Sigmoid colon (tissue), 7 donors: ENCODE measurements at regions of chr5 and their contacts with region 1.

Region 1: GRCh38 chr5:72459089-72459661 is 48.0 kb downstream of the ZNF366 start:
- DNase-seq: no peak
- H3K4me3 ChIP-seq: no peak overlapping the region
- H3K27ac ChIP-seq: peak overlapping the region in 3 of 4 donors; percentile 29 to 55 (median 35)
- H3K4me1 ChIP-seq: peaks cover 0 to 19% (median 14%) of the 10 kb centered on the region in 4 donors
- H3K27me3 ChIP-seq: no peaks in the 10 kb centered on the region
- CTCF ChIP-seq: no peak
- EP300 ChIP-seq: no peak
- POLR2A ChIP-seq: no peak

Region 2: GRCh38 chr5:72510610-72511181 is 51.5 kb after region 1 on chr5:
- intact Hi-C with region 1: loop called (anchors 5 kb)
- DNase-seq: peak; percentile 70
- H3K4me3 ChIP-seq: no peak overlapping the region
- H3K27ac ChIP-seq: peak overlapping the region; percentile 47 to 66 (median 58)
- H3K4me1 ChIP-seq: peaks cover 0 to 57% (median 46%) of the 10 kb centered on the region in 4 donors
- H3K27me3 ChIP-seq: no peaks in the 10 kb centered on the region
- CTCF ChIP-seq: no peak
- EP300 ChIP-seq: no peak
- POLR2A ChIP-seq: no peak

Region 3: DNA sequence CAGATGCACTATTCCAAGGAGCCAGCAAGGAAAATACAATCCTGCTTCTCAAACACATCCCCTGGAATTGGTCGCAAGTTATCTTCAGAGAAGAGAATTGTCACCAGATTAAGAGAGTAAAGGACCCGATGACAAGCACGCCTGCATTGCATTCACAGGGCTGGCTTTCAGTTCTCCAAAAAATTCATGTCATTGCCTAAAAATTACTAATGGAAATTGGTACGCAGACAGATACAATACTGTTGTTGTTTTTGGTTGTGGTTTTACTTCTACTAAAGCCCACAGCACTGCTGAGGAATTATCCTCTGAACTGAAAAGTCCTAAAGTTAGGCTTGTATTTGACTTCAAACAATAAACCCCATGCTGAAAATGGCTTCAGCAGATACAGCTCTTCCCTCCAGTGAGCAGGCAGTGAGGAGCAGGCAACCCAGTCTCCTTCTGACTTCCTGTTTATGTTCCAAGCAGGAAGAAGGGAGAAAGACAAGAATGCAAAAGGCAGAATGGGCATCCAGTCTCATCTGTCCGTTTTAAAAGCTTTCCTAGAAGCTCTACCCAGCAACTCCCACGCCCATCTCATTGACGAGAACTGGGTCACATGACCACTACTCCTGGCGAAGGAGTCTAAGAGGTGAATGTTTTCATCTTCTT is 128.6 kb after region 1 on chr5:
- intact Hi-C with region 1: no loop called
- DNase-seq: no peak
- H3K4me3 ChIP-seq: no peak overlapping the region
- H3K27ac ChIP-seq: no peak overlapping the region
- H3K4me1 ChIP-seq: no peaks in the 10 kb centered on the region
- H3K27me3 ChIP-seq: no peaks in the 10 kb centered on the region
- CTCF ChIP-seq: no peak
- EP300 ChIP-seq: no peak
- POLR2A ChIP-seq: no peak